HEK293 (cell line): ENCODE measurements at regions of chr19 and their contacts with region 1.

Region 1: GRCh38 chr19:47130591-47131227 is at the start of gene SAE1:
- H3K4me3 ChIP-seq: peak within 1 kb of the TSS; percentile 75
- H3K27ac ChIP-seq: peak within 1 kb of the TSS; percentile 92
- H3K4me1 ChIP-seq: peaks cover 22% of the 10 kb centered on the region
- CTCF ChIP-seq: peak; percentile 97

Region 2: DNA sequence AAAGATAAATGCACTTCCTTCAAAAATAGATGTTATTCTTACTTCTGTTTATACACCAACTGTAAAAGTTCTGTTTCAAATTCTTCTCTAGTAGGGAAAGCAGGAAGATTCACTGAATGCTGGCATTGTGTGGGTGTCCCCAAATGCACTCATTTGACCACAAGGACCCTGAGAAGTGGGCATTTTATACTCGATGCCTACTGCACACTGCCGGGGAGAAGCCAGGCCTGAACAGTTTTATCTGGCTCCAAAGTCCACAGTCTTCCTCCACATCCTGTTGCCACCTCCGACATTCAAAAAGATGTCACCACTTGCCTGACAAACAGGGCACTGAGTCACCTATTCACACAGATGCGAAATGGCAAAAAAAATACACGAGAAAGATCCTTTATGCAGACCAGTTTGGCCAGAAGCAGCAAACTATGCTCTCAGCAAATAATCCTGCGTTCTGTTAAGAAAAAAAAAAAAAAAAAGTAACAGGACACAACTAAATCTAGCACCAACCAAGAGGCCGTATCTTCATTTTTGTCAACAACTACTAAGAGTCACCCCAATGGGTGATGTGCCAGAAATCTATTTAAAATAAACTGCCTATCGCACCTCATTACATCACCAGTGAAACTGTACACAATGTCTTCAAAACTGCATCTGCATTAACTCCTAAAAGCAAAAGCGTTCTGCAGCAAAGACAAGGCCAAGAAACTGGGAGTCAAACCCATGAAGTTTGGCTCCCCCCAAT is 23.3 kb before region 1 on chr19:
- CTCF ChIA-PET with region 1: interaction called, 3 read pairs
- POLR2A ChIA-PET with region 1: interaction called, 86 read pairs
- H3K4me3 ChIP-seq: no peak overlapping the region
- H3K27ac ChIP-seq: peak overlapping the region; percentile 25; the same call in 1 of the 2 replicates
- H3K4me1 ChIP-seq: peaks cover 33% of the 10 kb centered on the region
- CTCF ChIP-seq: no peak

Region 3: GRCh38 chr19:47190167-47190727 is 59.5 kb after region 1 on chr19:
- CTCF ChIA-PET with region 1: no interaction called
- POLR2A ChIA-PET with region 1: no interaction called
- H3K4me3 ChIP-seq: no peak overlapping the region
- H3K27ac ChIP-seq: peak overlapping the region; percentile 52
- H3K4me1 ChIP-seq: peaks cover 30% of the 10 kb centered on the region
- CTCF ChIP-seq: no peak